Right ventricle myocardium inferior (tissue), 1 donor: ENCODE measurements at regions of chrX and their contacts with region 1.

Region 1: DNA sequence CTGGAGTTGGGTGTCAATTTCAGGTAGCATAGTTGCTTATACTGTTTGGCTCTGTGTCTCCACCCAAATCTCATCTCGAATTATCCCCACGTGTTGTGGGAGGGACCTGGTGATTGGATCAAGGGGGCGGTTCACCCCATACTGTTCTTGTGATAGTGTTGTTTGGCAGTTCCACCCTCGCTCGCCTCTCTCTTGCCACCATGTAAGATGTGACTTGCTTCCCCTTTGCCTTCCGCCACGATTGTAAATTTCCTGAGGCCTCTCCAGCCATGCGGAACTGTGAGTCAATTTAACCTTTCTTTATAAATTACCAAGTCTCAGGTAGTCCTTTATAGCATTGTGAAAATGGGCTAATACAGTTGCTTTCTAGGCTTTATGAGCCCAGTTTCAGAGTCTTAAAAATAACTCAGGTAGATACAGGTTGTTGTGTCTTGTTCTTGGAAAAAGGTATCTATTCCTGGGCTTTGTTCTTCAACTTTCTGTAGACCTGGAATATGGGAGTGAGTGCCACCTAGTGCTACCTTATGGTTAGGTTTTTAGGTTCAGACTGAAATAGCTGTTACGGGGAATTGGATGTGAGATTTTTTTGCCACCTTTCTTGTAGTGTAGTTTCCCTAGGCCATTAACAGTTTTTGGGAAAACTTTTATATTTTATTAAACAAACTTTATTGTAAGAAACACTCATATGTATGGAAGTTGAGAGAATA is 15.6 kb downstream of the PGK1 start:
- DNase-seq: no peak
- ATAC-seq: no peak

Region 2: DNA sequence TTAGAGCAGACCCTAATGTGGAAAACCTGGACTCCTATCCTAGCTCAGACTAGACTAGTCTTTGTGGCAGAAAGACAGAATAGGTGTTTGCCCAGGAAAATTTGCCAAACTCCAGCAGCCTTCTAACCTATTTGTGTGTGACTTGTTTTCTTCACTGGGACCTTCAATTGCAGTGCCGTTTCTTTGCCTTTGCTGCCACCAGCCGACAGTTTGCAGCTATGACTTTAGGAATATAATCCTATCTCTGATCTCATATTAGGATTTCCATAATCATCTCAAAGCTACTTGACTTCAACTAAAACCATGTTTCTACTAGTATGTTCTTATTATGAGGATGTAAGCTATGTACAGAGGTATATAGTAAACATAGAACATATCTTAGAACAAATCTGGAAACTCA is 90.0 kb before region 1 on chrX:
- intact Hi-C with region 1: loop called (anchors 5 kb)
- DNase-seq: no peak
- ATAC-seq: no peak

Region 3: DNA sequence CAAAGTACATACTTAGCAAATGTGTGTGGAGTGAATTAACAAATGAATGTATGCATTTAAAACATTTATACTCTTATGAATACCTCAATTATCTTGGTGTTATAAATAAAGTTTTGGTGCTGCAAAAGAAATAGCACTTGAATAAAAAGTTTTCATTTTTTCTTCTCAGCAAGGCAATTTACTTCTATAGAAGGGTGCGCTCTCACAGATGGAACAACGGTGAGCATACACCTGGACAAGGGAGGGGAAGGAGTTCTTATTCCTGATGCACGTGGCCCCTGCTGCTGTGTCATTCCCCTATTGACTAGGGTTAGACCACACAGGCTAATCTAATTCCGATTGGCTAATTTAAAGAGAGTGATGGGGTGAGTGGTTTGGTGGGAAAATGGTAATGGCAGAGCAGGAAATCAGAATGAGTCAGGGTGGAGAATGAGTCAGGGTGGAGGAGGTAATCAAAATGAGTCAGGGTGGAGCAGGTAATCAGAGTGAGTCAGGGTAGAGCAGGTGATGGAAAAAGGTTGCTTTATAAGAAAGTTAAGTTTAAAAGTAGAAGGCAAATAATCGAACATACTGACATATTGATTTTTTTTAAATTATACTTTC is 43.8 kb before region 1 on chrX:
- intact Hi-C with region 1: no loop called
- DNase-seq: no peak
- ATAC-seq: no peak

Region 4: DNA sequence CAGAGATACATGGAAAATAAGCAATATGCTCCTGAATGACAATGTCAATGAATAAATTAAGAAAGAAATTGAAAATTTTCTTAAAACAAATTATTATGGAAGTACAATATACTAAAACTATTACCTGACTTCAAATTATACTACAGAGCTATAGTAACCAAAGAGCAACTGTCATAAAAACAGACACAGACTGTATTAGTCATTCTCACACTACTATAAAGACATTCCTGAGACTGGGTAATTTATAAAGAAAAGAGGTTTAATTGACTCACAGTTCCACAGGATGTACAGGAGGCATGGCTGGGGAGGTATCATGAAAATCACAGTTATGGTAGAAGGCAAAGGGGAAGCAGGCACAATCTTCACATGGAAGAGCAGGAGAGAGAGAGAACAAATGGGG is 267.7 kb after region 1 on chrX:
- intact Hi-C with region 1: no loop called
- DNase-seq: no peak
- ATAC-seq: no peak